ENCODE measurements at regions of chr1 and their contacts with region 1.

Region 1: GRCh38 chr1:153001382-153001781 is at the start of gene SPRR3:
- DNase-seq: no peak
- H3K4me3 ChIP-seq: no peak within 1 kb of the TSS
- H3K4me3 Mint-ChIP-seq: no peak within 1 kb of the TSS
- H3K27ac ChIP-seq: no peak within 1 kb of the TSS
- H3K27ac Mint-ChIP-seq: no peak within 1 kb of the TSS
- H3K4me1 ChIP-seq: no peaks in the 10 kb centered on the region
- H3K4me1 Mint-ChIP-seq: no peaks in the 10 kb centered on the region
- H3K27me3 ChIP-seq: peaks cover 0 to 1% of the 10 kb centered on the region in 2 donors
- H3K27me3 Mint-ChIP-seq: peaks cover 5 to 7% (median 7%) of the 10 kb centered on the region in 3 donors
- CTCF ChIP-seq: no peak
- polyA plus RNA-seq, gene SPRR3: not detected

Region 2: GRCh38 chr1:153058826-153059784 is 57.7 kb after region 1 on chr1:
- intact Hi-C with region 1: loop called in 1 of 2 experiments (anchors 5 kb)
- DNase-seq: no peak
- H3K4me3 ChIP-seq: no peak overlapping the region
- H3K4me3 Mint-ChIP-seq: peak overlapping the region in 1 of 2 donors; percentile 17
- H3K27ac ChIP-seq: no peak overlapping the region
- H3K27ac Mint-ChIP-seq: no peak overlapping the region
- H3K4me1 ChIP-seq: no peaks in the 10 kb centered on the region
- H3K4me1 Mint-ChIP-seq: no peaks in the 10 kb centered on the region
- H3K27me3 ChIP-seq: peaks cover 0 to 2% of the 10 kb centered on the region in 2 donors
- H3K27me3 Mint-ChIP-seq: peaks cover 5 to 29% (median 5%) of the 10 kb centered on the region in 3 donors
- CTCF ChIP-seq: no peak

Measured in CD14-positive monocyte (primary cell).